Left cardiac atrium (tissue), 4 donors: ENCODE measurements at regions of chr1 and their contacts with region 1.

Region 1: DNA sequence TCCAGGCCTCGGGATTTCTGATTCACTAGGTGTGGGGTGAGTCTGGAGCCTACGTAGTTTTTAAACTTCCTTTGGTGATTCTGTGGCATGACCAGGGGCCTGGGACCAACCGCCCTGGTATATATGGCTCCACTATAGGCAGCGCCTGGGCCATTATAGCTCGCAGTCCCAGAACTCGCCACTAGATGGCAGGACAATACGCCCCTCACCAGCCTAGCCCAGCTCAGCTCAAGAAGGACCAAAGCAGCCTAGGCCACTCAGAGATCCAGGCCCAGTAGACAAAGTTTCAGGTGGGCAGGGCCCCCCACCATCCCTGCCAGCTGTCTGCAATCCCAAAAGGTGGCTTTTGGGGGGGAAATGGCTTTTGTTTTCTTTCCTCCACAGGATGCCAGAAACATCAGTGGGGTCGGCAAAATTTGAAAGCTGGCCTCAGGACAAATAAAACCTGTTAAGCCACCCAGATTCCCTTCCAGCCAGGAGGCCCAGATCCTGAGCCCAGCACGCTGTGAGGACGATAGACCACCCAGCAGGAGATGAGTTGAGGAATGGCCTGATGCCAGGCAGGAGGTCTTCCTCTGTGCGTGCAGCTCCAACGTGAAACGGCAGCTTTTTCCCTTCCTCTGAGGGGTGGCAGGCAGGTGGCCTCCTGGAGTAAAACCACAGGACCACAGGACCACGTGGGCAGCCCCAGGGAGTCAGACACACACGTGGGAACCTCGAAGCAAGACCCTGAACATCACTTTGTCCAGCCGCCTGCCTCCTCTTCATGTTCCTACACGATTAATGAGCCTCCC is 24.8 kb upstream of the TMEM51 start:
- DNase-seq: peak; percentile 72
- ATAC-seq: peak; percentile 78 to 95

Region 2: DNA sequence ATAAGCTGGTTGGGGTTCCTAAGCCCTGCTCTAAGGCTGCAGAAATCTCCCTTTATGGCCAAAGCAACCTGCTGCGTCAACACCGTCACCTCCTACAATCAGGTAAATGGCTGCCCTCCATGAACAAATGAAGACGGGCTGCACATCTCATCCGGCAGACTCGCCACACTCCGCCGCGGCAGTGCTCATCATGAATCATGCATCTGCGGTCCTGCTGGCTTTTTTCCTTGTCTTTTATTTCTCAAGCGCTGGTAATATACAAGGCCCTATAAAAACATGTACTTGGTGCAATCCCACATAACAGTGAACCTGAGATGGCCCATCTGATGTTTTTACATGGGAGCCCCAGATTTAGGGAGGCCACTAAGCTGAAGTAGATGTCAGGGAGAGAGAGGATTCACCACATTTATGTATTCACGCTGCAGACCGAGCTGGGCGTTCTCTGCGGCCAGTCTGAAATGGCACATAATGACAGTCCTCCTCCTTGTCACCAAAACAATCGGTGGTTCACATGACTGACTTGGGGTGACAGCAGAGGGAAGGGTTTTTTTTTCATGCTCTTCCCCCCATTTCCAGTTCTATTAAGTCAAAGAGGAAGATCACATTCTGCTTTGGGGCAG is 438.6 kb before region 1 on chr1:
- intact Hi-C with region 1: no loop called
- DNase-seq: no peak
- ATAC-seq: no peak

Region 3: GRCh38 chr1:14755518-14756252 is 373.0 kb before region 1 on chr1:
- intact Hi-C with region 1: no loop called
- DNase-seq: no peak
- ATAC-seq: no peak

Region 4: GRCh38 chr1:15028102-15028501 is 100.6 kb before region 1 on chr1:
- intact Hi-C with region 1: no loop called
- DNase-seq: peak; percentile 71
- ATAC-seq: peak; percentile 64 to 77

Region 5: DNA sequence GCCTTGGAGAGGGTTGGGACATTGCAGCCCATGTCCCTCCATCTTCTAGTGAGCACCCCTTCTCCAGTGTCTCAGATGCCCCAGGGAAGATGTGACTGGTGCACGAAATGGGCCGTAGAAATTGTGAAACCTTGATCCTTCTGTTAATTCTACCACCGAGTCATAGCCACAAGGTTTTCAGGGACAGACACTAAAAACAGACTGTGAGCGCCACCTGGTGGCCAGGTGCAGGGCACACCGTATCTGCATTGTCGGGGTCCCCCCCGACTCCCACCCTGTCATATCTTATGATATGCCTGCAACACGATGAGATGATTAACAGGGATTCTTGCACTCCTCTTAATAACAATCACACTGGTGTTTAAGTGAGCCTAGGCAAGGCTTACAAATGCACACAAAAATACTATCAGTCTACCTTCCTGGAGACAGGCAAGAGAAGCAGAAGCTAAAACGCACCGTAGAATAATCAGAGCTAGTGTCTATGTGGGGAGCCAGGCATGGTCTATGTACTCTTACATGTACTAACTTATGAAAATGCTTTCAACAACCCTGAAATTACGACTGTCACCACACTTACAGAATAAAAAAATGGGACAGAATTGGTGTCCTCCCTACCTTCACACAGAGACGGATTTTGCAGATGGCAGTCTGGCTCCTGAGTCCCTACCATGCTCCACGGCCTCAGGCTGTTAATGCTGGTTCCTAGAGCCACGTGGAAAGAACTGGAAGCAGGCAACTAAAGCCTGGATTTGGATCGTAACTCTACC is 176.2 kb after region 1 on chr1:
- intact Hi-C with region 1: loop called (anchors 2 to 10 kb)
- DNase-seq: peak; percentile 70
- ATAC-seq: peak; percentile 53 to 68